ENCODE measurements at regions of chr1 and their contacts with region 1.

Region 1: DNA sequence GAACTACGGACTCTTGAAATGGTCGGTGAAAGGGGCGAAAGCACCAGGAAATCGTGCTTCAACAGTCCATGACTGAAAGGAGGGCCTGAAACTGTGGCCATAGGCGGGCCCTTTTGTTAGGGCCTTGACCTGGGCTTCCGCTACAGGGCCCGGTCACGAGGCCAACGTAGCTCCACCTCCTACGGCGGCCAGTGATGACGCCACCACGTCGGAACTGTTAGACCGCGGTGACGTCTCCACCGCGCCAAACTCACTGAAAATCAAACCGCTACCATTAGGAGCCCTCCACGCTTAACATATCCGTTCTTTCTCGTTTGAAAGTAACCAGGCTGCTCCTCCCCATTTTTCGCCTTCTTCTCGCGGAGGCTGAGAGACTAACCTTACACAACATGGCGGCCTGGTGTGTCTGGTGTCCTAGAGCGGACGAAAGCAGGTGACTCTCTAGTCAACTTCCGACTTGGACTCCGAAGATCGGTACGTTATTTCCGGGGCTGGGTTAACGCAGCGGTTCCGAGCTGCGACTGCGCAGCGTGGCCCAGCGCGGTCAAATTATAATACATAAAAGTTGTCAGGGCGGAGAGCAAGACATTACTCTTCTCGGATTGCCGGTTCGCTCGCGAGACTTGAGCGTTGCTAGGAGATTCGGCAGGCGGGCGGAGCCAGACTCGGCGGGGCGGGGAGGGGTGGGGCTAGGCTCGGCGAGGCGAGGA is 376 bp upstream of the CACYBP start:
- DNase-seq: peak; percentile 90 to 99 (median 97)
- ATAC-seq: peak; percentile 78 to 85 (median 80)
- H3K4me3 ChIP-seq: peak overlapping the region; percentile 75 to 82
- H3K4me3 Mint-ChIP-seq: no peak overlapping the region
- H3K27ac ChIP-seq: peak overlapping the region; percentile 99
- H3K27ac Mint-ChIP-seq: no peak overlapping the region
- H3K4me1 ChIP-seq: peaks cover 22% of the 10 kb centered on the region in 2 experiments
- H3K4me1 Mint-ChIP-seq: peaks cover 37 to 51% (median 47%) of the 10 kb centered on the region in 3 donors
- H3K27me3 ChIP-seq: no peaks in the 10 kb centered on the region
- H3K27me3 Mint-ChIP-seq: no peaks in the 10 kb centered on the region

Region 2: GRCh38 chr1:174800216-174800851 is 199.0 kb before region 1 on chr1:
- CTCF ChIA-PET with region 1: interaction called in 1 of 2 experiments, 24 read pairs
- POLR2A ChIA-PET with region 1: interaction called, 6 to 34 read pairs
- DNase-seq: peak in 17 of 35 experiments; percentile 1 to 43 (median 14)
- ATAC-seq: peak; percentile 6 to 14 (median 10)
- H3K4me3 ChIP-seq: peak overlapping the region; percentile 57 to 64
- H3K4me3 Mint-ChIP-seq: no peak overlapping the region
- H3K27ac ChIP-seq: peak overlapping the region; percentile 58
- H3K27ac Mint-ChIP-seq: no peak overlapping the region
- H3K4me1 ChIP-seq: peaks cover 3 to 11% of the 10 kb centered on the region in 2 experiments
- H3K4me1 Mint-ChIP-seq: peaks cover 0 to 16% (median 5%) of the 10 kb centered on the region in 3 donors
- H3K27me3 ChIP-seq: no peaks in the 10 kb centered on the region
- H3K27me3 Mint-ChIP-seq: no peaks in the 10 kb centered on the region

Region 3: GRCh38 chr1:174913225-174913903 is 86.0 kb before region 1 on chr1:
- CTCF ChIA-PET with region 1: no interaction called
- POLR2A ChIA-PET with region 1: interaction called in 1 of 2 experiments, 11 read pairs
- DNase-seq: no peak
- ATAC-seq: no peak
- H3K4me3 ChIP-seq: no peak overlapping the region
- H3K4me3 Mint-ChIP-seq: no peak overlapping the region
- H3K27ac ChIP-seq: no peak overlapping the region
- H3K27ac Mint-ChIP-seq: peak overlapping the region; percentile 39 to 71
- H3K4me1 ChIP-seq: no peaks in the 10 kb centered on the region
- H3K4me1 Mint-ChIP-seq: peaks cover 20 to 42% (median 31%) of the 10 kb centered on the region in 3 donors
- H3K27me3 ChIP-seq: no peaks in the 10 kb centered on the region
- H3K27me3 Mint-ChIP-seq: no peaks in the 10 kb centered on the region

Region 4: DNA sequence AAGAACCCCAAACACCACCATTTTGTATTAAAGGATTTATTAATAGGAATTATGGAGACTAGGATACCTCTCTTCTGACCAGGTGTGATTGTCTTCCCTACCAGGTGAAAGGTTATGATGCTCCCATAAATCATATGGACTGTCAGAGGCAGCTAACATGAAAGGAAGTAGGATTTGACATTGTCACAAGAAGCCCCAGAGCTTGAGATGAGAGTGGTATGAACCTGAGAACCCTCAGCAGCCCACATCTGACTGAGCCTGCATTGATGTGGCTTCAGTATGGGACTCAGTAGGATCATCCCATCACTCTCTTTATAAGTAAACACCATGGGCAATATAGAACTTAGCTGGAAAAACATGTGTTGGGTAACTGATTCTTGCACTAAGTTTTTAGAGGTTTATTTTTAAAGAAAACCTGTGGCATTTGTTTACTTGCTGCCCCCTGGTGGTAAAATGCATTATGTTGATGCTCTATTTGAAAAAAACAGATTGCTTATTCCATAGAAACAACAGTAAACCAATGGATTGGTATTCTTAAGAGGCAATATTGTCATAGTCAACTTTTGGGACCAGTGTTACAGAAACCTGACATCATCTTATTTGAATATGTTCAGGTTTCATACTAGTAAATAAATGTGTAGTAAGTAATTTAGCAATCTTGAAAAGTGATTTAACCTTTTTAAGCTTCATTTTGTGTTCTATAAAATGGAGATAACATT is 16.2 kb before region 1 on chr1:
- CTCF ChIA-PET with region 1: interaction called in 1 of 2 experiments, 18 read pairs
- POLR2A ChIA-PET with region 1: interaction called, 3 to 13 read pairs
- DNase-seq: peak in 21 of 35 experiments; percentile 15 to 80 (median 41)
- ATAC-seq: no peak
- H3K4me3 ChIP-seq: no peak overlapping the region
- H3K4me3 Mint-ChIP-seq: no peak overlapping the region
- H3K27ac ChIP-seq: no peak overlapping the region
- H3K27ac Mint-ChIP-seq: peak overlapping the region; percentile 49 to 64
- H3K4me1 ChIP-seq: peaks cover 0 to 5% of the 10 kb centered on the region in 2 experiments
- H3K4me1 Mint-ChIP-seq: peaks cover 20 to 42% (median 41%) of the 10 kb centered on the region in 3 donors
- H3K27me3 ChIP-seq: no peaks in the 10 kb centered on the region
- H3K27me3 Mint-ChIP-seq: no peaks in the 10 kb centered on the region

Region 5: DNA sequence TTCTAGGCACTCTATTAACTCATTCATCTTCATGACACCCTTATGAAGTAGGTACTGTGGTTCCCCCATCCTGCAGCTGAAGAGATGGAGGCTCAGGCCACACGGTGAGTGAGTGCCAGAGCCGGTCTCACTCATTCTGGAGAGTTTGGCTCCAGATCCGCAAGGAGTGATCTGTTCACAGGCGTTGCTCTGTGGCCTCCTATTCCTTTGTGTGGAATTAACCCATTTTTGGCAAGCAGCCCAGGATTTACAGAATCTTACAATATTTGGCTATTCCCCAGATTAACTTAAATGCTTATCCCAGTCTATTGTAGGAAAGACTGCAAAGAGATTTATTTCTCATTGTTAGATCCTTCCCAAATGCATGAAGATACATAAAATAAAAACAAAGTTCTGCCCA is 163.6 kb after region 1 on chr1:
- CTCF ChIA-PET with region 1: no interaction called
- POLR2A ChIA-PET with region 1: no interaction called
- DNase-seq: no peak
- ATAC-seq: no peak
- H3K4me3 ChIP-seq: no peak overlapping the region
- H3K4me3 Mint-ChIP-seq: no peak overlapping the region
- H3K27ac ChIP-seq: no peak overlapping the region
- H3K27ac Mint-ChIP-seq: peak overlapping the region in 1 of 2 donors; percentile 66
- H3K4me1 ChIP-seq: no peaks in the 10 kb centered on the region
- H3K4me1 Mint-ChIP-seq: peaks cover 7 to 33% (median 10%) of the 10 kb centered on the region in 3 donors
- H3K27me3 ChIP-seq: no peaks in the 10 kb centered on the region
- H3K27me3 Mint-ChIP-seq: no peaks in the 10 kb centered on the region